ENCODE measurements at regions of chr15 and their contacts with region 1.

Region 1: GRCh38 chr15:41774062-41774881 is at the start of gene MAPKBP1:
- DNase-seq: peak; percentile 99
- ATAC-seq: peak; percentile 98
- H3K4me3 ChIP-seq: peak within 1 kb of the TSS; percentile 64
- H3K27ac ChIP-seq: peak within 1 kb of the TSS; percentile 75
- H3K4me1 ChIP-seq: peaks cover 32% of the 10 kb centered on the region
- H3K27me3 ChIP-seq: no peaks in the 10 kb centered on the region
- CTCF ChIP-seq: peak; percentile 64
- total RNA-seq, gene MAPKBP1: 22.4 TPM

Region 2: DNA sequence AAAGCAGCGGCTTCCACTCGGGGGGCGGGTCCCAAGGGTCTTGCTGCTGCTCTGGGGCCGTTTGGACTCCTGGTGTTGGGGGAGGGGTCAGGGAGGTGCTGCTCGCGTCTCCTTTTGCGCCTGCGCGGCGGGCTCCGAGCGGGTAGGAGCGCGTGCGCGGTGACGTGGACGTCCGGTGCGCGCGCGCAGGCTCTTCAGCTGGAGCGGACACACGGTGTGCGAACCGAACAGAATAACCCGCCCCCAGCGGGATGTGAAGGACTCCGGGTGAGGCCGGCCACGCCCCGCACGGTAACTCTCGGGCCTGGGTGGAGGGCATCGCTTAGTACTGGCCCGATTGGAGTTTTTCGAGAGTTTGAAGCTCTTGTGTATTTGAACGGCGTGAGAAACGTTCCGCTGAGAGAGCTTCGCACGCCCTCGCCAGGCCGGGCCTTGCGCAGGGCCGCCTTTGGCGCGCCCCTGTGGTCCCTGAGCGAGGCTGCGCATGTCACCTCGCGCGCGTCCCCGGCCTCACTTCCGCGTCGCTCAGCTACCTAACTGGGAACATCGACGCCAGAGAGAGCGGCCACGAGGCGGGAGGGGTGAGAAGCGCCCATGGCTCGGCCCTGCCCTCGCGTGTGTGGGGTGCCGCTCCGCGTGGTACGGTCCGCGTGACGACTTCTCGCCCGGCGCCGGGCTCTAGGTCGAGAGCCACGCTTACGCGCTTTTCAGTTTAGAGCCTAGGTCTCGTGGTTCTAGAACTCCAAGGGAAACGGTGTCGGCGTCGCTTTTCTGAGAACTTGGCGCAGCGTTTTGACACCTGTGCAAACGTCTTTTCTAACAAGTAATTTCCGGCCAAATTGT is 113.8 kb before region 1 on chr15 and contains the start of gene MGA:
- intact Hi-C with region 1: no loop called
- DNase-seq: peak; percentile 95
- ATAC-seq: peak; percentile 94
- H3K4me3 ChIP-seq: peak within 1 kb of the TSS; percentile 64
- H3K27ac ChIP-seq: peak within 1 kb of the TSS; percentile 85
- H3K4me1 ChIP-seq: peaks cover 11% of the 10 kb centered on the region
- H3K27me3 ChIP-seq: no peaks in the 10 kb centered on the region
- CTCF ChIP-seq: no peak
- total RNA-seq, gene MGA: 39.2 TPM

Region 3: GRCh38 chr15:41811432-41812195 is 37.3 kb after region 1 on chr15:
- intact Hi-C with region 1: loop called (anchors 5 kb)
- DNase-seq: peak; percentile 89
- ATAC-seq: peak; percentile 93
- H3K4me3 ChIP-seq: no peak overlapping the region
- H3K27ac ChIP-seq: no peak overlapping the region
- H3K4me1 ChIP-seq: no peaks in the 10 kb centered on the region
- H3K27me3 ChIP-seq: no peaks in the 10 kb centered on the region
- CTCF ChIP-seq: peak; percentile 90

Region 4: DNA sequence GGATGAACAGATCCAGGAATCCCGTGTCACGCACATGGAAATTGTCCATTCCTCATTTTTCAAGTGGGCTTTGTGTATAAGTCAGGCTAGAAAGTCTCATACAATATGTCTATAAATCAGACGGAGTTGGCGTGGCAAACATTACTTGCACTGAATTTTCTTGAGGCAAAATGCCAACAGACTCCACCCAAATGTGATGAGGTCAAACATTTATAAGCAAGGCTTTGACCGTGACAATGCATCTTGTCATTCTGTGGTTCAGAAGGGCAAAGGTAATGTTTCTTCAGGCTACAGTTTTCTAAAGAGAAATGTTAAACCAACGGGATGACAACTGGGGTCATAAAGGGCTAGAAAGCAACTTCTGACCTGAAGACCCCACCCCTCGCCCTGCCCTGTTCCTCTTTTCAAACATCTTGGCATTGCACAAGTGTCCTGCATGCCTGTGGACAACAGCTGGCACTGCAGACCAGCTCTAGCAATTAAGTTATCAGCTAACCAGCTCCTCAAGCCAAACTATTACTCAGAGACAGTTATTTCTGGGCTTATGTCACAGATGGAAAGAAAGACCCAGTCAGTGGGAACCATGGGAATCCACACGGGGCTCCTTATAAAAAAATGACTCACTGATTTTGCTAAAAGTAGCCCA is 156.1 kb after region 1 on chr15:
- intact Hi-C with region 1: no loop called
- DNase-seq: peak; percentile 63
- ATAC-seq: peak; percentile 61
- H3K4me3 ChIP-seq: no peak overlapping the region
- H3K27ac ChIP-seq: peak overlapping the region; percentile 65
- H3K4me1 ChIP-seq: peaks cover 87% of the 10 kb centered on the region
- H3K27me3 ChIP-seq: no peaks in the 10 kb centered on the region
- CTCF ChIP-seq: peak; percentile 28

Measured in upper lobe of right lung (tissue), 1 donor.